CD14-positive monocyte (primary cell): ENCODE measurements at regions of chr2 and their contacts with region 1.

Region 1: GRCh38 chr2:12694990-12695774 is 21.6 kb upstream of the TRIB2 start:
- DNase-seq: peak; percentile 68 to 87 (median 81)
- H3K4me3 ChIP-seq: no peak overlapping the region
- H3K4me3 Mint-ChIP-seq: no peak overlapping the region
- H3K27ac ChIP-seq: no peak overlapping the region
- H3K27ac Mint-ChIP-seq: peak overlapping the region in 5 of 7 donors; percentile 51 to 85 (median 67)
- H3K4me1 ChIP-seq: peaks cover 4 to 15% of the 10 kb centered on the region in 2 donors
- H3K4me1 Mint-ChIP-seq: peaks cover 4% of the 10 kb centered on the region
- H3K27me3 ChIP-seq: peaks cover 0 to 4% of the 10 kb centered on the region in 2 donors
- H3K27me3 Mint-ChIP-seq: peaks cover 4 to 10% (median 5%) of the 10 kb centered on the region in 3 donors
- CTCF ChIP-seq: peak; percentile 12

Region 2: DNA sequence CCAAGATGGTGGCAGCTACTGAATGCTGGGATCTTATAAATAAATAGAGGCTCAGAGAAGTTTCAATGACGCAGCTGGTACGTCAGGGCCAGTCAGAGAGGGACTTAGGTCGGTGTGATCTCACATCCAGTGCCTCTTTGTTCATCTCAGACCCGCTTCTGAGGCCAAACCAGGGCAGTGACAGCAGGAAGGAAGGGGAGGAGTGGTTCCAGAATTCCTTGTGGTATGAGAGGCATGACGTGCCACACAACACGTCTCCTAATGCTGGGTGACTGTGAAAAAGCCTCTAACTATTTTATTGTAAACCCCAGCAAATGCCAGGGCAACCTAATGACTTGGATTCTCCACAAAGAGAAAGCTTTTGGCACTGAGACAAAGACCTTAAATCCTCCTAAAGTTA is 525.5 kb before region 1 on chr2:
- intact Hi-C with region 1: loop called in 1 of 2 experiments (anchors 10 kb)
- DNase-seq: peak; percentile 72 to 88 (median 85)
- H3K4me3 ChIP-seq: no peak overlapping the region
- H3K4me3 Mint-ChIP-seq: no peak overlapping the region
- H3K27ac ChIP-seq: peak overlapping the region in 1 of 2 donors; percentile 78
- H3K27ac Mint-ChIP-seq: peak overlapping the region; percentile 90 to 96 (median 93)
- H3K4me1 ChIP-seq: peaks cover 22 to 23% of the 10 kb centered on the region in 2 donors
- H3K4me1 Mint-ChIP-seq: peaks cover 27% of the 10 kb centered on the region
- H3K27me3 ChIP-seq: no peaks in the 10 kb centered on the region
- H3K27me3 Mint-ChIP-seq: peaks cover 2 to 7% (median 4%) of the 10 kb centered on the region in 3 donors
- CTCF ChIP-seq: no peak